Naive thymus-derived CD4-positive, alpha-beta T cell (primary cell): ENCODE measurements at regions of chr14 and their contacts with region 1.

Region 1: GRCh38 chr14:23120541-23121251 is 1.6 kb upstream of the CEBPE start:
- DNase-seq: peak; percentile 58 to 77 (median 74)
- ATAC-seq: peak; percentile 92
- H3K4me3 ChIP-seq: peak overlapping the region; percentile 53
- H3K4me3 Mint-ChIP-seq: peak overlapping the region; percentile 63 to 87 (median 72)
- H3K27ac ChIP-seq: peak overlapping the region; percentile 71
- H3K27ac Mint-ChIP-seq: peak overlapping the region; percentile 90 to 99 (median 96)
- H3K4me1 ChIP-seq: peaks cover 21 to 41% of the 10 kb centered on the region in 2 donors
- H3K4me1 Mint-ChIP-seq: peaks cover 26 to 65% (median 48%) of the 10 kb centered on the region in 7 donors
- H3K27me3 ChIP-seq: no peaks in the 10 kb centered on the region
- H3K27me3 Mint-ChIP-seq: peaks cover 0 to 5% (median 0%) of the 10 kb centered on the region in 5 donors

Region 2: GRCh38 chr14:23068476-23069412 is 52.0 kb before region 1 on chr14:
- CTCF ChIA-PET with region 1: interaction called, 5 read pairs
- POLR2A ChIA-PET with region 1: interaction called, 16 read pairs
- intact Hi-C with region 1: loop called in 1 of 2 experiments (anchors 1 kb)
- DNase-seq: peak; percentile 37 to 83 (median 74)
- ATAC-seq: peak; percentile 90
- H3K4me3 ChIP-seq: no peak overlapping the region
- H3K4me3 Mint-ChIP-seq: peak overlapping the region in 7 of 10 donors; percentile 56 to 76 (median 64)
- H3K27ac ChIP-seq: no peak overlapping the region
- H3K27ac Mint-ChIP-seq: peak overlapping the region; percentile 63 to 88 (median 78)
- H3K4me1 ChIP-seq: peaks cover 16 to 28% of the 10 kb centered on the region in 2 donors
- H3K4me1 Mint-ChIP-seq: peaks cover 30 to 58% (median 46%) of the 10 kb centered on the region in 7 donors
- H3K27me3 ChIP-seq: no peaks in the 10 kb centered on the region
- H3K27me3 Mint-ChIP-seq: no peaks in the 10 kb centered on the region

Region 3: DNA sequence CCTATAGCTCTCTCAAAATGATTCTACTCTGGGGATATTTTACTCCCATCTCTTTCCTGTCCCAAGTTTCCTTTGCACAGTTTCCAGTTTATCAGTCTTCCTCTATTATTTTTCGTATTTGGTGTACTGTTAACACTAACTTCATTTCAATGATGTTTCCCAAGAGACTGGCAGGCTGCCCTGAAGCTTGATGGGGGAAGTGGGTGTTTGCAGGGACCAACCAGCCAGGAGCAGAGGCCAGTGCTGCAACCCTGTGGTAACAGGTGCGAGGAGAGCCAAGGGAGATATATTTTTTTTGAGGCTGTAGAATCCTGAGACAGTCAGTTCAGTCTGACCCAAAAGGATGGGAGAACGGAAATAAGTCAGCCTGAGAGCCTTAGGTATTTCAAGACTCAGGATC is 10.2 kb after region 1 on chr14:
- CTCF ChIA-PET with region 1: interaction called, 16 read pairs
- POLR2A ChIA-PET with region 1: interaction called, 4 read pairs
- intact Hi-C with region 1: no loop called
- DNase-seq: no peak
- ATAC-seq: no peak
- H3K4me3 ChIP-seq: no peak overlapping the region
- H3K4me3 Mint-ChIP-seq: no peak overlapping the region
- H3K27ac ChIP-seq: no peak overlapping the region
- H3K27ac Mint-ChIP-seq: peak overlapping the region in 1 of 9 donors; percentile 51
- H3K4me1 ChIP-seq: no peaks in the 10 kb centered on the region
- H3K4me1 Mint-ChIP-seq: peaks cover 0 to 9% (median 0%) of the 10 kb centered on the region in 7 donors
- H3K27me3 ChIP-seq: no peaks in the 10 kb centered on the region
- H3K27me3 Mint-ChIP-seq: peaks cover 0 to 11% (median 0%) of the 10 kb centered on the region in 5 donors

Region 4: GRCh38 chr14:23162800-23163199 is 42.1 kb after region 1 on chr14:
- CTCF ChIA-PET with region 1: interaction called, 7 read pairs
- POLR2A ChIA-PET with region 1: interaction called, 9 read pairs
- intact Hi-C with region 1: loop called in 1 of 2 experiments (anchors 1 kb)
- DNase-seq: no peak
- ATAC-seq: no peak
- H3K4me3 ChIP-seq: no peak overlapping the region
- H3K4me3 Mint-ChIP-seq: peak overlapping the region in 5 of 10 donors; percentile 29 to 86 (median 62)
- H3K27ac ChIP-seq: no peak overlapping the region
- H3K27ac Mint-ChIP-seq: peak overlapping the region in 7 of 9 donors; percentile 18 to 94 (median 76)
- H3K4me1 ChIP-seq: peaks cover 0 to 19% of the 10 kb centered on the region in 2 donors
- H3K4me1 Mint-ChIP-seq: peaks cover 3 to 46% (median 23%) of the 10 kb centered on the region in 7 donors
- H3K27me3 ChIP-seq: no peaks in the 10 kb centered on the region
- H3K27me3 Mint-ChIP-seq: peaks cover 0 to 15% (median 0%) of the 10 kb centered on the region in 5 donors

Region 5: DNA sequence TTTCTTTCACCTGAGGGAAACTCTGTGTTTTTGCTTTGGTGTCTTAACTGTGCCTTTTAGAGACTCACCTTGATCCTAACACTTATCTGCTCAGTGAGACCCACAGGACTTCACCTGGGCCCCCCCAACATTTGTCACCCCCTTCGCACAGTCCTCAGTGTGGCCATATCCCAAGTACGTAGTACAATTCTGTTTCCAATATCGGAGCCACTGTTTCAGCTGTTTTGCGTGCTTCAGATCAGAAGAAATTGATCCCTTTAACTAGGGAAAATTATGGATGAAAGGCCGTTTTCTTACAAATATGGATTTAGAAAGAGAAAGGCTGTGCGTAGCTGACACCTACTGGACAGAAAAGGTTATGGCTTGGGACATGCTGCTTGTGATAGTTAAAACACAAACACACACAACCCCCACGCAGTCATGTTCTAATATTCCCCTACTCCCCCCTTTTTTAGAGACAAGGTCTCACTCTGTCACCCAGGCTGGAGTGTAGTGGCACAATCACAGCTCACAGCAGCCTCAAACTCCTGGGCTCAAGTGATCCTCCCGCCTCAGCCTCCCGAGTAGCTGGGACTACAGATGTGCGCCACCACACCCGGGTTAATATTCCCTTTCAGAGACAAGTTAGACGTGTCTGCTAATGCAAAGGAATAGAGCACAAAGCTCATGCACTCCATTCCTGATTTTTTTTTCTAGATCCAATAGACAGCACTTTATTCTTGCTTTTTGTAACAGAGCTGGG is 66.4 kb after region 1 on chr14:
- CTCF ChIA-PET with region 1: interaction called, 250 read pairs
- POLR2A ChIA-PET with region 1: interaction called, 43 read pairs
- intact Hi-C with region 1: loop called (anchors 1 kb)
- DNase-seq: peak in 7 of 9 donors; percentile 25 to 55 (median 36)
- ATAC-seq: peak; percentile 73
- H3K4me3 ChIP-seq: no peak overlapping the region
- H3K4me3 Mint-ChIP-seq: no peak overlapping the region
- H3K27ac ChIP-seq: no peak overlapping the region
- H3K27ac Mint-ChIP-seq: peak overlapping the region in 3 of 9 donors; percentile 12 to 65 (median 26)
- H3K4me1 ChIP-seq: peaks cover 3 to 4% of the 10 kb centered on the region in 2 donors
- H3K4me1 Mint-ChIP-seq: peaks cover 0 to 11% (median 2%) of the 10 kb centered on the region in 7 donors
- H3K27me3 ChIP-seq: no peaks in the 10 kb centered on the region
- H3K27me3 Mint-ChIP-seq: peaks cover 0 to 19% (median 0%) of the 10 kb centered on the region in 5 donors

Region 6: DNA sequence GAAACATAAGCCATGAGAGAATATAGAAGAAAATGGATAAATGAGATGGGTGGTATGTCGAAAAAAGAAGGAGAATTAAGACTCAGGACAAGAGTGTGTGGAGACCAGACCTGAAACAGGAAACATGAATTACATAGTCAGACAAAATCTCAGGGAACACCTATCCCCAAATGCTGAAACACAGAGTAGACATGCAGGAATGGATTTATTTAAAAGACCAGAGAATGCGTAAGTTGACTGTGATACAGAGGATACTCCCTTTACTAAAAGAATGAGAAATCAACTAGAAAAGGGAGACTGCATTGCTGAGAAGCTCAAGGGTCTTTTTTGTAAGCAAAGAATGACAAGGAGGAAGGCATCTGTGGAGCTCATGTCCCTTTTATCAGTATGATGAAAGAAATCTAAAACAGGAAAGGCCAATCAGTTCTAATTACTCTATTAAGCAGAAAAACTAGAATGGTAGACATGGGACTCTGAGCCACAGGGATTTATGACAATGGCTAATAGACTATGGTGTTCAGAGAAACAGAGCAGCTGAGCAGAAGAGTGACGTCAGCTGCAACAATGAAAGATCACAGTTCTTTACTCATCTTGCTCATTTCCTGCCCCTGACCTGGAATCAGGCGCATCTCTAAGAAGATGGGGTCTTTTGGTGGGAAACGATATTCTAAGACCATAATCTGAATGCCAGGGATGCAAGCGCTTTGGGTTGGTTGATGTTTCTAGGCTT is 694.0 kb after region 1 on chr14:
- CTCF ChIA-PET with region 1: no interaction called
- POLR2A ChIA-PET with region 1: no interaction called
- intact Hi-C with region 1: no loop called
- DNase-seq: no peak
- ATAC-seq: no peak
- H3K4me3 ChIP-seq: no peak overlapping the region
- H3K4me3 Mint-ChIP-seq: no peak overlapping the region
- H3K27ac ChIP-seq: no peak overlapping the region
- H3K27ac Mint-ChIP-seq: no peak overlapping the region
- H3K4me1 ChIP-seq: no peaks in the 10 kb centered on the region
- H3K4me1 Mint-ChIP-seq: no peaks in the 10 kb centered on the region
- H3K27me3 ChIP-seq: no peaks in the 10 kb centered on the region
- H3K27me3 Mint-ChIP-seq: peaks cover 0 to 8% (median 0%) of the 10 kb centered on the region in 5 donors